H1 (cell line): ENCODE measurements at regions of chr11 and their contacts with region 1.

Region 1: GRCh38 chr11:14413307-14414069 is 54.5 kb upstream of the RRAS2 start:
- DNase-seq: peak; percentile 43 to 70
- H3K4me3 ChIP-seq: no peak overlapping the region
- H3K27ac ChIP-seq: no peak overlapping the region
- H3K4me1 ChIP-seq: peaks cover 0 to 21% (median 5%) of the 10 kb centered on the region in 4 experiments; a peak in 3 of 7 replicates
- H3K27me3 ChIP-seq: no peaks in the 10 kb centered on the region
- CTCF ChIP-seq: peak; percentile 55 to 75 (median 64)
- EP300 ChIP-seq: no peak
- POLR2A ChIP-seq: no peak
- RAD21 ChIP-seq: peak; percentile 46 to 68

Region 2: GRCh38 chr11:14288189-14288935 is 125.1 kb before region 1 on chr11:
- CTCF ChIA-PET with region 1: interaction called, 30 read pairs
- POLR2A ChIA-PET with region 1: no interaction called
- DNase-seq: no peak
- H3K4me3 ChIP-seq: no peak overlapping the region
- H3K27ac ChIP-seq: no peak overlapping the region
- H3K4me1 ChIP-seq: no peaks in the 10 kb centered on the region
- H3K27me3 ChIP-seq: no peaks in the 10 kb centered on the region
- CTCF ChIP-seq: no peak
- EP300 ChIP-seq: no peak
- POLR2A ChIP-seq: no peak
- RAD21 ChIP-seq: no peak

Region 3: DNA sequence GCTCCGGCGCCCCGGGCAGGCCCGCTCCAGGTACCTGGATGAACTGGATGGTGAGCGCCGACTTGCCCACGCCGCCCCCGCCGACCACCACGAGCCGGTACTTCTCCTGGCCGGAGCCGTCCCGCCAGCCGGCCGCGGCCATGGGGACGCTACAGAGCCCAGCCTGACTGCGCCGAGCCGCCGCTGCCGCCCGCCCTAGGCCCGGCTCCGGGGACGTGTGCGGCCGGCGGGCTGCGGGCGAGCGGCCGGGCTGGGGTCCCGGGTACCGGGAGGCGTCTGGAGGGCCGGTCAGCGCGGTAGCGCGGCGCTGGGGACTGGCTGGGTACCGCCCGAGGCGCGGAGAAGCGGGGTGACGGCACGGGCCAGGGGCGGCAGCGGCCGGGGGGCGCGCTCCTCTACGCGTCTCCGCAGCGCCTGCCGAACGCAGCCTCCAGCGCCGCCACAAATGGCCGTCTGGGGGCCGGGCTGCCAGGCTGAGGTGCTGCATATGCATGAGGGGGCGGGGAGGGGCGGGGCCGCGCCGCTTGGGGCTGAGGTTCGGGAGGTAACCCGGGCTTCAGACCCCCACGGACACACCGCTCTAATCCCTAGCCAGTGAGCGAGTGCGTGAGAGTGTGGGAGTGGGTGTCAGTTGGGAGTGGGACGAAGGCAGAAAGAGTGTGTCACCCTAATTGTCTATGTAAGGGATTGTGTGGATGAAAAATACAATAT is 54.6 kb before region 1 on chr11 and contains the start of gene RRAS2:
- CTCF ChIA-PET with region 1: interaction called, 8 read pairs
- POLR2A ChIA-PET with region 1: interaction called, 10 read pairs
- DNase-seq: peak in 1 of 2 experiments; percentile 84
- H3K4me3 ChIP-seq: peak within 1 kb of the TSS; percentile 85 to 99 (median 94)
- H3K27ac ChIP-seq: peak within 1 kb of the TSS; percentile 78; the same call in 1 of the 2 replicates
- H3K4me1 ChIP-seq: peaks cover 0 to 7% (median 4%) of the 10 kb centered on the region in 4 experiments; a peak in 6 of 7 replicates
- H3K27me3 ChIP-seq: no peaks in the 10 kb centered on the region
- CTCF ChIP-seq: no peak
- EP300 ChIP-seq: no peak
- POLR2A ChIP-seq: peak; percentile 74 to 81; a peak in 2 of 3 replicates
- RAD21 ChIP-seq: no peak
- total RNA-seq, gene RRAS2: 220 and 234 TPM in 2 replicates

Region 4: DNA sequence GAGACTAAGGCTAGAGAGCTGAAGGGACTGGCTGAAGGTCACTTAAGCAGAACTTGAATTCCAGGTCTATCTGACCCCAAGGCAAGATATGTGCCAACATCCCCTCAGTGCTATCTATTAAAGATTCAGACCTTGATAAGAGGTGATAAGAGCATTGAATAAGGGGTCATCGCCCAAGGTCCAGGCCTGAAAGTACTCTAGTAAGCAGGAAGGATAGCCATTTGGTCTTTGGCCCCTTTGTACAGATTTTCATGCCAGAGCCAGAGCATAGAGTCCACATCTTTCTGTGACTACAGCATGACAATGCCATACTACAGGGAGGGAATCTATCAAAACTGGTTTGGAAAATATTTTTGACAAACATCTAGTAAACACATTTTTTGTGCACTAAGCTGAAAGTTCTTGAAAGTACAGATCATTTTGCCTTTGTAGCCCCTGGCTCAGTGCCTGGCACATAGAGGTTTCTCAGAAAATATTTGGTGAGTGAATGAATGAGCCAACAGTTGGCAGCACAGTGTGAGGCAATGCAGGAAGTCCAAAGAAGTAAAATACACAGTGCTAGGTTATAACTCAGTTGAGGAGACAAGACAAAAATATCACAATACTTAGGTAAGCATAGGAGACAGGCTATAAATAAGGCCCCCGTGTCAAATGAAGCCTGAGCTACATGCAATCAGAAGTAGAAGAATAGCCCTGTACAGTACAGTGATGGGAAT is 39.4 kb before region 1 on chr11:
- CTCF ChIA-PET with region 1: interaction called, 26 read pairs
- POLR2A ChIA-PET with region 1: interaction called, 3 read pairs
- DNase-seq: peak in 1 of 2 experiments; percentile 20
- H3K4me3 ChIP-seq: no peak overlapping the region
- H3K27ac ChIP-seq: no peak overlapping the region
- H3K4me1 ChIP-seq: peaks cover 0 to 8% (median 3%) of the 10 kb centered on the region in 4 experiments; a peak in 3 of 7 replicates
- H3K27me3 ChIP-seq: no peaks in the 10 kb centered on the region
- CTCF ChIP-seq: no peak
- EP300 ChIP-seq: no peak
- POLR2A ChIP-seq: no peak
- RAD21 ChIP-seq: no peak

Region 5: DNA sequence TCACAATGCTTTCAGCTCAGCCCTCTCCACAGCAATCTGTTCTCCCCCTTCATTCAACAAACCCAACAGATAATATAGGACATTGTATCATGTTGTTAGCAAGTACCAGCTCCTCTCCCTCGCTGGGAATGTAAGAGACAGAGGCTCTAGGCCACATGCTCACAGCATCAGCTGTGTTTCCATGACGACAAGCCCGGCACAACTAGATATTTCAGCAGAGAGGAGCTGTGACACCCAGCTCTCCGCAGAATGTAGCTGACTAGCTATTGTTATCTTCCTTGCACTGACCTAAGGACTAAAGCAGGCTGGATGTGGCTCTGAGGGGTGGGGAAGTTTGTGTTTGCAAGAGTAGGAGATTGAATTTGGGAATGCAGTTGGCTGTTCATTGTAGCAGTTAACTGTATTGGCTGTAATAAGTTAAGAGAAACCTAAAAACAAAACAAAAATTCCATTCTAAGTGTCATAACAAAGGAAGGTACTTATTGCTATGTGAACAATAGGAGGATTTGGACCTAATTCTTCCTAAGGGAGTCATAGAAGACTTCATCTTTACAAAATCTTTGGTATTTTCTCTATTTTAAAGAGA is 26.5 kb before region 1 on chr11:
- CTCF ChIA-PET with region 1: interaction called, 16 read pairs
- POLR2A ChIA-PET with region 1: interaction called, 5 read pairs
- DNase-seq: peak; percentile 15 to 66
- H3K4me3 ChIP-seq: no peak overlapping the region
- H3K27ac ChIP-seq: no peak overlapping the region
- H3K4me1 ChIP-seq: peaks cover 0 to 9% (median 3%) of the 10 kb centered on the region in 4 experiments; a peak in 2 of 7 replicates
- H3K27me3 ChIP-seq: peaks cover 0 to 4% (median 1%) of the 10 kb centered on the region in 4 experiments; a peak in 4 of 7 replicates
- CTCF ChIP-seq: no peak
- EP300 ChIP-seq: no peak
- POLR2A ChIP-seq: no peak
- RAD21 ChIP-seq: no peak

Region 6: DNA sequence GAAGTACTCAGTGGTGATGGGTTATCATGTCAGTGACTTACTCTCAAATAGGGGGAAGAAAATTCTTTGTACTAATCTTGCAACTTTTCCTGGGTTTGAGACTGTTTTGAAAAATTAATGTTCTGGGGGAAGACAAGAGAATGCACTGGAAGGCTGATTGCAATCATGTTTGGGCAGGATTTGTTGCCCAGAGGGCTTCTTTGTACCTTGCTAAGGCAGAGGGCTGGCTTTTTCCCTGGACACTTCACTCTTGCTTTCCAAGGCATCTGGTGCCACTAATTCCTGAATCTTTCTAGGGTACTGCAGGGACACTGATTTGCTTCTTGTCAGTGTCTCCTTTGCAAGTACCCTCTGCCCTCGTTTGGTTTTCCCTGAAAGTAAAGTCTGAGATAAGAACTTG is 15.2 kb before region 1 on chr11:
- CTCF ChIA-PET with region 1: interaction called, 46 read pairs
- POLR2A ChIA-PET with region 1: interaction called, 4 read pairs
- DNase-seq: no peak
- H3K4me3 ChIP-seq: no peak overlapping the region
- H3K27ac ChIP-seq: no peak overlapping the region
- H3K4me1 ChIP-seq: no peaks in the 10 kb centered on the region
- H3K27me3 ChIP-seq: no peaks in the 10 kb centered on the region
- CTCF ChIP-seq: no peak
- EP300 ChIP-seq: no peak
- POLR2A ChIP-seq: no peak
- RAD21 ChIP-seq: no peak

Region 7: DNA sequence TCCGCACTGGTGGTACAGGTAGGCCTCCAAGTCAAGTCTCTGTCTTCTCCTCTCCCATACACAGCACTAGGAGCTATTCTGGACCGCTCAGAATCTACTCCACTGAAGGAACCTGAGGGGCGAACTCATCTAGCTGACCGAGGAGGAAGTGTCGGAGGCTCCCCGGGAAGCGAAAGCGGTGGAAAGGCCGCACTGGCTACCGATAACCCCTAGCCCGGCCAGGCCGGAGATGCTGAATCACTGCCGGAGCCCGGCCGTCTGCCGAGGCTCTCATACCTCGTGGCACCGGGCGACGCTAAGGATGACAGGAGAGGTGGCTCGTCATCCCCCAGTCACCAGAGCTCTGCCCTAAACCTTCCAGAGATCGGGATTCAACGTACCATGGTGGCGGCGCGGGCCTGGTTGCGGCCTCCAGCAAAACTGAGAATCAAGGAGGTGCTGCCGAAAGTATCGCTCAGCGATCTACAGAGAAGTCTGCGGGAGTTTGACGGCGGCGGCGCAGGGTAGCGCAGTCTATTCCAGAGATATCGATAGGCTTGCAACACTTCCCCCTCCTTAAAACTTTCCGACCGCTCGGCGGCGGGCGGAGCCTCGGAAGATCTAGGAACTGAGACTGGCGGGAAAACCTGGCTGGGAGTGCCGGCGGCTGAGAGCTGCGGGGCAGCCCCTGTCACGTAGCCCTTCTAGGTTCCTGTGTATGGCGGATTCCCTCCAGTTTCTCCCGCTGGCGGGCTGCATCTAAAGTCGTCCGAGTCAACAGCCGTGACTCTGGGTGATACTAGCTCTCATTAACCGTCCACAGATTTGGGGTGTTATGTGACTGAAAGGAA is 106.6 kb after region 1 on chr11 and contains the start of gene PSMA1:
- CTCF ChIA-PET with region 1: no interaction called
- POLR2A ChIA-PET with region 1: no interaction called
- DNase-seq: peak; percentile 91
- H3K4me3 ChIP-seq: peak within 1 kb of the TSS; percentile 90 to 100 (median 100)
- H3K27ac ChIP-seq: peak within 1 kb of the TSS; percentile 74
- H3K4me1 ChIP-seq: peaks cover 0 to 2% (median 0%) of the 10 kb centered on the region in 4 experiments; a peak in 2 of 7 replicates
- H3K27me3 ChIP-seq: no peaks in the 10 kb centered on the region
- CTCF ChIP-seq: no peak
- EP300 ChIP-seq: peak in 1 of 2 experiments; percentile 96; a peak in 2 of 3 replicates
- POLR2A ChIP-seq: peak; percentile 46 to 88
- RAD21 ChIP-seq: peak; percentile 18 to 23; a peak in 3 of 4 replicates
- total RNA-seq, gene PSMA1: 148 and 150 TPM in 2 replicates

Region 8: GRCh38 chr11:14698771-14699170 is 285.3 kb after region 1 on chr11:
- CTCF ChIA-PET with region 1: no interaction called
- POLR2A ChIA-PET with region 1: no interaction called
- DNase-seq: no peak
- H3K4me3 ChIP-seq: no peak overlapping the region
- H3K27ac ChIP-seq: no peak overlapping the region
- H3K4me1 ChIP-seq: no peaks in the 10 kb centered on the region
- H3K27me3 ChIP-seq: no peaks in the 10 kb centered on the region
- CTCF ChIP-seq: no peak
- EP300 ChIP-seq: no peak
- POLR2A ChIP-seq: no peak
- RAD21 ChIP-seq: no peak